ENCODE measurements at regions of chr14 and their contacts with region 1.

Region 1: GRCh38 chr14:55707365-55707804 is 127.4 kb downstream of the KTN1 start:
- DNase-seq: no peak

Region 2: GRCh38 chr14:56339855-56340701 is 632.7 kb after region 1 on chr14:
- intact Hi-C with region 1: loop called (anchors 10 kb)
- DNase-seq: peak; percentile 93

Region 3: GRCh38 chr14:56422703-56423213 is 715.4 kb after region 1 on chr14:
- intact Hi-C with region 1: loop called in 1 of 2 experiments (anchors 10 kb)
- DNase-seq: no peak

Region 4: GRCh38 chr14:56474419-56475022 is 767.1 kb after region 1 on chr14:
- intact Hi-C with region 1: loop called (anchors 10 kb)
- DNase-seq: no peak

Measured in posterior vena cava (tissue), 2 donors.